ENCODE measurements at regions of chr2 and their contacts with region 1.

Region 1: DNA sequence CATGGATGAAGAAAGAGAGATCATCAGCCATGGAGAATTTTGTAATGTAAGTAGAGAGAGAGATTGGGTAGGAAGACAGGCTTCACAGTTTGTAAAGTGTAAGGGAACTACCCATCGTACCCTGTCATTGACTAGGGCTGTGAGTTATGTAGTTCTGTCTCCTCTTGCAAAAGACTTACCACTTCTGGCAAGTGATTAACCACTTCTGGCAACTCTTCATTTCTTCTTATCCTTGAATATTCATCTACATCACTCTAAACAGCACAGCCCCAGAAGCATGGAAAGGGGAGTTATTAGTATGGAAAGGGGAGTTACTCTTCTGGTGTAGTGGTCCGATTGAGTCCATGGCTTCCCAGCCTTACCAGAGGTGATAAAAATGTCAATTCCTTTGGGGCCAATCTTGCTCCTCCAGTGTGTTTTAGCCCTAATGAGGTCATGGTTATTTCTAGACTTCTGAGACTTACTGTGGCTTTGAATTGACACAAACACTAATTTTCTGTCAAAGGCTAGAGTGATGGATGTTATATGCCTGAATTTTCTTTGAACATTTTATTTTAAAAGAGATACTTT is 52.0 kb downstream of the STAT1 start:
- DNase-seq: no peak
- H3K4me3 ChIP-seq: no peak overlapping the region
- H3K27ac ChIP-seq: no peak overlapping the region
- H3K4me1 ChIP-seq: no peaks in the 10 kb centered on the region
- H3K27me3 ChIP-seq: no peaks in the 10 kb centered on the region
- CTCF ChIP-seq: no peak
- POLR2A ChIP-seq: no peak

Region 2: GRCh38 chr2:189492451-189492850 is 1469.6 kb before region 1 on chr2:
- intact Hi-C with region 1: loop called (anchors 5 kb)
- DNase-seq: no peak
- H3K4me3 ChIP-seq: no peak overlapping the region
- H3K27ac ChIP-seq: no peak overlapping the region
- H3K4me1 ChIP-seq: no peaks in the 10 kb centered on the region
- H3K27me3 ChIP-seq: no peaks in the 10 kb centered on the region
- CTCF ChIP-seq: no peak
- POLR2A ChIP-seq: no peak